Ovary (tissue), 10 donors: ENCODE measurements at regions of chr1 and their contacts with region 1.

Region 1: GRCh38 chr1:13667691-13668090 is 32.3 kb upstream of the PRDM2 start:
- DNase-seq: no peak
- H3K4me3 ChIP-seq: no peak overlapping the region
- H3K27ac ChIP-seq: no peak overlapping the region
- H3K4me1 ChIP-seq: peaks cover 1% of the 10 kb centered on the region
- H3K27me3 ChIP-seq: no peaks in the 10 kb centered on the region
- CTCF ChIP-seq: no peak
- EP300 ChIP-seq: no peak
- POLR2A ChIP-seq: no peak

Region 2: DNA sequence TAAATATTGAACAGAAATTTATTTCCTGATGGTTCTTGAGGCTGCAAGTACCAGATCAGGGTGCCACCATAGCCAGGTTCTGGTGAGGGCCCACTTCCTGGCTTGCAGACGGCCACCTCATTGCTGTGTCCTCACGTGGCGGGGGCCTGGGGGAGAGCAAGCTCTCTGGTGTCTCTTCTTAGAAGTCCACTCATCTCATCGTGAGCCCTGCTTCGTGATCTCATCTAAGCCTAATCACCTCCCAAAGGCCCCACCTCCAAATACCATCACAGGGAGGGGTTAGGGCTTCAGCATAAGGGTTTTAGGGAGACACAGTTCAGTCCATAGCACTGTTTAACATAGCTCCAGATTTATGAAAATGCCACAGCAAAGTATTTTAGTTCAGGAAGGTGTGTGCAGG is 152.0 kb after region 1 on chr1:
- intact Hi-C with region 1: loop called in 3 of 4 experiments (anchors 5 to 10 kb)
- DNase-seq: peak in 1 of 5 donors; percentile 2
- H3K4me3 ChIP-seq: no peak overlapping the region
- H3K27ac ChIP-seq: no peak overlapping the region
- H3K4me1 ChIP-seq: peaks cover under 1% of the 10 kb centered on the region
- H3K27me3 ChIP-seq: no peaks in the 10 kb centered on the region
- CTCF ChIP-seq: no peak
- EP300 ChIP-seq: no peak
- POLR2A ChIP-seq: no peak

Region 3: GRCh38 chr1:13836136-13836535 is 168.4 kb after region 1 on chr1:
- intact Hi-C with region 1: no loop called
- DNase-seq: no peak
- H3K4me3 ChIP-seq: no peak overlapping the region
- H3K27ac ChIP-seq: no peak overlapping the region
- H3K4me1 ChIP-seq: peaks cover under 1% of the 10 kb centered on the region
- H3K27me3 ChIP-seq: no peaks in the 10 kb centered on the region
- CTCF ChIP-seq: no peak
- EP300 ChIP-seq: no peak
- POLR2A ChIP-seq: no peak

Region 4: GRCh38 chr1:13899856-13900255 is 232.2 kb after region 1 on chr1:
- intact Hi-C with region 1: loop called in 1 of 4 experiments (anchors 5 kb)
- DNase-seq: no peak
- H3K4me3 ChIP-seq: no peak overlapping the region
- H3K27ac ChIP-seq: peak overlapping the region; percentile 54 to 83
- H3K4me1 ChIP-seq: peaks cover 7% of the 10 kb centered on the region
- H3K27me3 ChIP-seq: no peaks in the 10 kb centered on the region
- CTCF ChIP-seq: no peak
- EP300 ChIP-seq: no peak
- POLR2A ChIP-seq: no peak

Region 5: DNA sequence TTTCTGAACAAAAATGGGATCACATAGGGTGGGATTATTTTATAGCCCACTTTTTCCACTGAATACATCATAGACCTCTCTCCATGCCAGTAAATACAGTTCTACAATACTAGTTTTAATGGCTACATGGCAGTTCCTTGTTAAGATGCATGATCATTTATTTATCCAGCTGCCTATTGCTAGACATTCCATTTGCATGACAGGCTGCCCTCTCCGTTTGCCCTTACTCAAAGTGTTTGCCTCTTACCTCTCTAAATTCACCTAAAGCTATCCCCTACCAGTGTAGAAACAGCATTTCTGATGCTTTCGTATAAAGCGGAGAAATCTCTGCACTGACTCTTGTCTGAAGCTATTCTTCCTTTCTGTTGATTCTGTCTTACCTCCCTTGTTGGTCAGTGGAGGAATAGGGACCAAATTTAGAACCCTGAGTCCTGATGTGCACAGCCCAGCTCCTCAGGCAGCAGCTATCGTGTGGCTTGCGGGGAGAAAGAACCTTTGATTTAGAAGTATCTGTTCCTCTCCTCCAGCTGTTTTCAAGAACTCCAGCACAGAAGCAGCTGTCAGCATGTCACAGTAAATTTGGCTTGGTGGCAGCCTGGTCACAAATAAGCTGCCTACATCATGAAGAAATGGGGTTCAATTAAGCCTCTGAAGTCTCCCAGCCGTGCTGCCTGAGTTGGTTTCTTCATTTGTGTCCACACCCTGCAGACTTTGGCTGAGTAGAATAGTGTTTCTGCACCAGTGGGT is 369.6 kb after region 1 on chr1:
- intact Hi-C with region 1: no loop called
- DNase-seq: no peak
- H3K4me3 ChIP-seq: no peak overlapping the region
- H3K27ac ChIP-seq: no peak overlapping the region
- H3K4me1 ChIP-seq: no peaks in the 10 kb centered on the region
- H3K27me3 ChIP-seq: no peaks in the 10 kb centered on the region
- CTCF ChIP-seq: no peak
- EP300 ChIP-seq: no peak
- POLR2A ChIP-seq: no peak